ENCODE measurements at regions of chr12 and their contacts with region 1.

Region 1: DNA sequence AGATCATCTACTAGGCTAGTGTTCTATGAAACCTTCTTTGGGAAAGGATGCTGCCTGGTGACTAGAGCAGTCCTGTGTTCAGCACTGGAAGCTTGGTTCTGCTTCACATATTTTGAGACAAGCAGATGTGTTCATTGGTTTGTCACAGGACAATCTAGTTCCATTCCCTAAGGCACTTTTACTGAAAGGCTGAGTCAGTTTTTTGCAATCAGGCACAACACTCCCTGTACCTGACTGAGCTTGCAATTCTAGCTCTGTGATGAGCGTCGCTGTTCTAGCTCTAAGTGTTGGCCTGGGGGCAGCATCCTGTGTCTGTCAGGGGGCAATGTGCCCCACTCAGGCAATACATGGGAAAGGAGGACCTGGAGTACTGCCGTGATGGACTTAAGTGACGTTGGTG is 144.4 kb downstream of the CAND1 start:
- DNase-seq: no peak
- H3K4me3 ChIP-seq: no peak overlapping the region
- H3K27ac ChIP-seq: no peak overlapping the region
- H3K4me1 ChIP-seq: no peaks in the 10 kb centered on the region
- H3K27me3 ChIP-seq: no peaks in the 10 kb centered on the region
- CTCF ChIP-seq: no peak
- POLR2A ChIP-seq: no peak

Region 2: GRCh38 chr12:66898700-66899469 is 514.7 kb before region 1 on chr12:
- intact Hi-C with region 1: loop called (anchors 5 kb)
- DNase-seq: no peak
- H3K4me3 ChIP-seq: no peak overlapping the region
- H3K27ac ChIP-seq: no peak overlapping the region
- H3K4me1 ChIP-seq: no peaks in the 10 kb centered on the region
- H3K27me3 ChIP-seq: no peaks in the 10 kb centered on the region
- CTCF ChIP-seq: no peak
- POLR2A ChIP-seq: no peak

Region 3: DNA sequence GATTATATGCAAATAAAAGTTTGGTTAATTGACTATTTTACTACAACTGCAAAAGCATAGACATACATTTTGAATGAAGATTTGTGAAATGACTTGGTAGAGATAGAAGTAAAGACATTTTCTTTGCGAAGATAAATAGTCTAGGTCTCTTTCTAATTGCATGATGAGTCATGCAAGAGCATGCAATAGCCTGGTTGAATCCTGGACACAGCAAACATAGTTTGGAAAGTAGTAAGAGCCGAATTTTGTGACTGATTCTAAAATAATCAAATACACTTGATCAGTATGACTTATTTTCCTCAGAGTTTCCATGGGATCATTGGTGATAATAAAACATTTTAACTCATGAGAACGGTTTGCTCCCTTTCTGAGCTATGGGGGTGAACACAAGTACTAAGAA is 172.1 kb before region 1 on chr12:
- intact Hi-C with region 1: no loop called
- DNase-seq: no peak
- H3K4me3 ChIP-seq: no peak overlapping the region
- H3K27ac ChIP-seq: no peak overlapping the region
- H3K4me1 ChIP-seq: no peaks in the 10 kb centered on the region
- H3K27me3 ChIP-seq: no peaks in the 10 kb centered on the region
- CTCF ChIP-seq: no peak
- POLR2A ChIP-seq: no peak

Region 4: DNA sequence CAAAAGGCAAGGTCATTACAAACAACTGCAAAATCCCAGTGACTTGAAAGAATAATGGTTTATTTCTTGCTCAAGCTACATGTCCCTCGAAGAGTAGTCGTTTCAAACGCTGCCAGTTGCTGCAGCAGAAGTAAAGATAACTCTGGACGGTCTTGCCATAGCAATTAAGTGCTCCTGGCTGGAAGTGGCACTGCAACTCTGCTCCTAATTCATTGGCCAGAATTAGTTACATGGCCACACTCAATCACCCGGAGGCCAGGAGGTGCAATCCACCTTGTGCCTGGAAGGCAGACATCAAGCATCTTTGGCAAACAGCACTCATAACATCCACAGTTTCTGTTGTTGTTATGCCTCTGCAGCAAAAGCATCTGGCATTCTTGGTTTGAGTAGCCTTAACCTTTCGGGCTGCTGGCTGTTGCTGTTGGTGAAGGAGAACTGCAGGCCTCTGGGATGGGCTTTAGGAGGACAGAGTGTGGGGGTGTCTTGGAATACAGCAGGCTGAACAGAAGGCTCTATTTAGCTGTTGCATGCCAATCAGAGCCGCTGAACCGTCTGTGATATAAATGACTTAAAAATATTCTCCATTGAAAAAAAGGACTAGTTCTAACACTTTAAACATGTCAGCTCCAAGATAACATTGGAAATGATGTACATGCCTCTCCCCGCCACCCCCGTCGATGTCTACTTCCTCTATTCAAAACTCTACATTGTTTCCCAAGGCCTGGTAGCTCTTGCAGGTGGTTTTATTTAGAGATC is 111.5 kb after region 1 on chr12:
- intact Hi-C with region 1: loop called (anchors 5 kb)
- DNase-seq: no peak
- H3K4me3 ChIP-seq: no peak overlapping the region
- H3K27ac ChIP-seq: no peak overlapping the region
- H3K4me1 ChIP-seq: no peaks in the 10 kb centered on the region
- H3K27me3 ChIP-seq: no peaks in the 10 kb centered on the region
- CTCF ChIP-seq: no peak
- POLR2A ChIP-seq: no peak